ENCODE measurements at regions of chr2 and their contacts with region 1.

Region 1: GRCh38 chr2:42095923-42096408 is 48.1 kb downstream of the PKDCC start:
- DNase-seq: peak in 2 of 3 donors; percentile 79 to 91
- ATAC-seq: peak; percentile 59
- H3K4me3 ChIP-seq: no peak overlapping the region
- H3K4me1 ChIP-seq: peaks cover 21% of the 10 kb centered on the region
- CTCF ChIP-seq: peak; percentile 68

Region 2: GRCh38 chr2:42238644-42239288 is 142.8 kb after region 1 on chr2:
- intact Hi-C with region 1: loop called (anchors 5 to 10 kb)
- DNase-seq: peak in 2 of 3 donors; percentile 51 to 78
- ATAC-seq: peak; percentile 86
- H3K4me3 ChIP-seq: no peak overlapping the region
- H3K4me1 ChIP-seq: peaks cover 15% of the 10 kb centered on the region
- CTCF ChIP-seq: no peak

Region 3: DNA sequence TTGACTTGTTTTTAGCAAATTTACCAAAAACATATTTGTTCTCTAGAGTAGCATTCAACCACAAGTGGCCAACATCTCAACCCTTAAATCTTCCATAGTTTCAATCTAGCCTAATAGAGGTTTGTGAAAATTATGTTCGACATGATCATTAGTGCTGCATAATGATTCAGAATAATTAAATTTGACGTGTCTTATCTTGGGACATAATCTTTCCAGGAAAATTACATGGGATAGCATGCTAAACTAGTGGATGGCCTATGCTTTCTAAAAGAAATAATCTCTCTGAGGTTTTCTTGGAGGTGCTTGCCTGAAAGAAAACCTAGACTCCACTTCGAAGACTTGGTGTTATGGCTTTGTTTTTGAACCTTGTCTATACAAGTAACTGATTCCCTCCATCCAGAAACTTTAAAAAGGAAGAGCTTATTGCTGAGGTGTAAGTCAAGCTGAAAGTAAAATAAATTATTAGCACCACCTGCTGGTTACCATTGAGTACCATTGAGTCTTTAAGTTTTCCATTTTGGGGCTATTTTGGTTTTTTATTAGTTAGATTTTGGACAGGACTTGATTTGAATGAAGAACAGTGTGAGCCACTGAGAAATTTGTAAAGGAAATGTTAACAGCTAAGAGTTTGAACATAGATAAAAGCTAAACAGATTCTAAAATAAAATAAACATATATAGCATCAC is 232.3 kb after region 1 on chr2:
- intact Hi-C with region 1: loop called in 1 of 2 experiments (anchors 10 kb)
- DNase-seq: no peak
- ATAC-seq: no peak
- H3K4me3 ChIP-seq: no peak overlapping the region
- H3K4me1 ChIP-seq: no peaks in the 10 kb centered on the region
- CTCF ChIP-seq: no peak